CD4-positive, alpha-beta memory T cell (primary cell): ENCODE measurements at regions of chr3 and their contacts with region 1.

Region 1: DNA sequence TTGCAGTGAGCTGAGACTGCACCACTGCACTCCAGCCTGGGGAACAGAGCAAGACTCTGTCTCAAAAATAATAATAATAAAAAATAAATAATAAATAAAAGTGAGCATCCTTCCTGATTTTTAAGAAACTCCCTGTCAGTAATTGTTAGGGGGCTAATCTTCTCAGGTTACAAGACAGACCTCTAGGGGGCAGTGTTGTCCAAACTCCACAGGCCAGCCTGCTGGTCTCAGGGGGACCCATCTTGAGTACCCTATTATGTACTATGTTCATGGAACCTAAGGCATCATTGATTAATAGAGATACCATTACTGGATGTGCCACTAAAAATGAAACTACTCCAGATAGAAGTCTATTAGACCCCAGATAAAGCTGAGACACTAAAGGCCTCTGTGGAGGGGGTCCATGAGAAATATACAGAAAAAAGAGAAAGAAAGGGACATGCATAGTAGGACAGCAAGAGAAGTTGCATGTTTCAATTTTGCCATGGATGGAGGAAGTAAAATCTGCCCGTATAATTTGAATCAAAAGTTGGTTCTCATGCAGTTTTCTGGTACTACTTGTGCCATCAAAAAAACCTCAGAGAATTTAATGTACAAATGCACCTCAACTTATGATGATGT is 85.5 kb upstream of the CDV3 start:
- DNase-seq: peak; percentile 48 to 61 (median 52)
- H3K4me3 ChIP-seq: no peak overlapping the region
- H3K4me3 Mint-ChIP-seq: peak overlapping the region in 3 of 8 donors; percentile 6 to 53 (median 21)
- H3K27ac ChIP-seq: no peak overlapping the region
- H3K27ac Mint-ChIP-seq: peak overlapping the region; percentile 3 to 85 (median 36)
- H3K4me1 ChIP-seq: peaks cover 49% of the 10 kb centered on the region
- H3K4me1 Mint-ChIP-seq: peaks cover 41 to 50% (median 45%) of the 10 kb centered on the region in 4 donors
- H3K27me3 ChIP-seq: no peaks in the 10 kb centered on the region
- H3K27me3 Mint-ChIP-seq: no peaks in the 10 kb centered on the region

Region 2: GRCh38 chr3:133256787-133257483 is 231.1 kb before region 1 on chr3:
- CTCF ChIA-PET with region 1: no interaction called
- POLR2A ChIA-PET with region 1: no interaction called
- intact Hi-C with region 1: no loop called
- DNase-seq: no peak
- H3K4me3 ChIP-seq: no peak overlapping the region
- H3K4me3 Mint-ChIP-seq: no peak overlapping the region
- H3K27ac ChIP-seq: no peak overlapping the region
- H3K27ac Mint-ChIP-seq: no peak overlapping the region
- H3K4me1 ChIP-seq: no peaks in the 10 kb centered on the region
- H3K4me1 Mint-ChIP-seq: no peaks in the 10 kb centered on the region
- H3K27me3 ChIP-seq: no peaks in the 10 kb centered on the region
- H3K27me3 Mint-ChIP-seq: peaks cover 0 to 3% of the 10 kb centered on the region in 2 donors

Region 3: DNA sequence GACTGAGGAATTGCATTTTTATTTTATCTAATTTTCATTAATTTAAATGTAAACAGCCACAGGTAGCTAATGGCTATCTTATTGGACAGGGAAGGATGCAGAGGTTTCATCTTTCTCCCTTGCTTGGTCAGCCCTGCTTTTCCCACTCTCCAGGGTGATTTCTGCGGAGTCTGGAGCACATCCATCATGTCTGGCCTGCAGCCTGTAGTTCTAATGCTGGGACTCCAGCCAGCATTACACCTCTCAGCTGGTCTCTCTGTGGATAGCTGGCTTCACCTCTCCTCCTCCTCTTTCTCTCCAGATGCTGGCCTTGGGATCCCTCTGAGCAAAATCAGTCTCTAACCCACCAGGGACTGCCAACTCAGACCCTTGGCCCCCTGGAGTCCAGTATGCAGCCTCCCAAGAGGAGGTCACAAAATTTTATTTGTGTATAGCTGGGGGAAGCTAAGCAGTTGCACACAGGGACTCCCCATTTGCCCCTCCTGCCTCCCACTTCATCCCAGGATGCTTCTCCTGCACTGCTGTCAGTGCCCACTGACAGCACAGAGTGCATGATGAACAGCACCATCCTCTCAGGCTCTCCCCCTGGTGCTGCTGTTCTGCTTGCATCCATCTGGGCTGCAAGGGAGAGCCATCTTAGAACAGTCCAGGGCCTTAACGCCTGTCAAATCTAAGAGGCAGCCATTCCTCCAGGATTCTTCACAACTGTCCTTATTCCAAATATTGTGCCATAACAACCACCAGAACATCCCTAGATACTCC is 86.5 kb before region 1 on chr3:
- CTCF ChIA-PET with region 1: no interaction called
- POLR2A ChIA-PET with region 1: no interaction called
- intact Hi-C with region 1: no loop called
- DNase-seq: no peak
- H3K4me3 ChIP-seq: no peak overlapping the region
- H3K4me3 Mint-ChIP-seq: no peak overlapping the region
- H3K27ac ChIP-seq: no peak overlapping the region
- H3K27ac Mint-ChIP-seq: no peak overlapping the region
- H3K4me1 ChIP-seq: no peaks in the 10 kb centered on the region
- H3K4me1 Mint-ChIP-seq: no peaks in the 10 kb centered on the region
- H3K27me3 ChIP-seq: no peaks in the 10 kb centered on the region
- H3K27me3 Mint-ChIP-seq: peaks cover 0 to 2% of the 10 kb centered on the region in 2 donors

Region 4: GRCh38 chr3:133448478-133449122 is 39.4 kb before region 1 on chr3:
- CTCF ChIA-PET with region 1: interaction called, 3 read pairs
- POLR2A ChIA-PET with region 1: interaction called, 13 read pairs
- intact Hi-C with region 1: no loop called
- DNase-seq: peak; percentile 22 to 56 (median 32)
- H3K4me3 ChIP-seq: no peak overlapping the region
- H3K4me3 Mint-ChIP-seq: peak overlapping the region in 7 of 8 donors; percentile 13 to 81 (median 60)
- H3K27ac ChIP-seq: no peak overlapping the region
- H3K27ac Mint-ChIP-seq: peak overlapping the region; percentile 57 to 96 (median 89)
- H3K4me1 ChIP-seq: peaks cover 21% of the 10 kb centered on the region
- H3K4me1 Mint-ChIP-seq: peaks cover 19 to 38% (median 27%) of the 10 kb centered on the region in 4 donors
- H3K27me3 ChIP-seq: no peaks in the 10 kb centered on the region
- H3K27me3 Mint-ChIP-seq: no peaks in the 10 kb centered on the region

Region 5: DNA sequence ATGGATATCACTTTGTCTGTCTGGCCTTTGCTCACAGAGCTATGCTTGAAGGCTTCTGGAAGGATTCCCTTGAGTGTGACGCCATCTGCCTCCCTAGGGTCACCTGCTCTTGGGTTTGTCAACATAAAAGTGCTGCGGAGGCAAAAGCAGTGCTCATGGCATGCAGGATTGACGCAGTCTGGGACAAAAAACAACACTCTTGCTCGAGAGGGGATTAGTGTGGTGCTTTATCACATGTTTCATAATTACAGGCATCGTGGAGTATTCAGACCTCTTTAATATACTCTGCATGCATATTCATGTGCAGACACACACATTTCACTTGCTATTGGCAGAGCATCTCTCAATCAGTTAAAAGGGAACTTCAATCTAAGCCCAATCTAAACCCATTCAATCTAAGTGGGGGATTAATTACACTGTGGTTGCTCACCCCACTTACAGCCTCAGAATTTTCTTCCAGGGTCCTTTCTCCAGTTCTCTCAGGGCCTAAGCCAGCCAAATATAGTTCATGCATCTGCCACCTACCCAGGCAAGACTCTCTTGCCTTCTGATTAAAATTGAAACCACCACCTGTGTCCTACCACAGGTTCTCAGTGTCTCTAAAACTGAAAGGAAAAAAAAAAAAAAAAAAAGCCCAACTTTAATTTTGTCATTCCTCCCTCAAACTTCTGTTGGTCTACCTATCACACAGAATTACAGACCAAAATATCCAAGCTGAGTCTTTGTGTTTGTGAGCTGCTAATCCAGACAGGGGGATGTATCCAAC is 12.6 kb before region 1 on chr3:
- CTCF ChIA-PET with region 1: interaction called, 20 read pairs
- POLR2A ChIA-PET with region 1: interaction called, 3 read pairs
- intact Hi-C with region 1: no loop called
- DNase-seq: no peak
- H3K4me3 ChIP-seq: no peak overlapping the region
- H3K4me3 Mint-ChIP-seq: peak overlapping the region in 5 of 8 donors; percentile 26 to 82 (median 53)
- H3K27ac ChIP-seq: no peak overlapping the region
- H3K27ac Mint-ChIP-seq: peak overlapping the region; percentile 22 to 90 (median 76)
- H3K4me1 ChIP-seq: peaks cover 22% of the 10 kb centered on the region
- H3K4me1 Mint-ChIP-seq: peaks cover 26 to 30% (median 27%) of the 10 kb centered on the region in 4 donors
- H3K27me3 ChIP-seq: no peaks in the 10 kb centered on the region
- H3K27me3 Mint-ChIP-seq: no peaks in the 10 kb centered on the region

Region 6: DNA sequence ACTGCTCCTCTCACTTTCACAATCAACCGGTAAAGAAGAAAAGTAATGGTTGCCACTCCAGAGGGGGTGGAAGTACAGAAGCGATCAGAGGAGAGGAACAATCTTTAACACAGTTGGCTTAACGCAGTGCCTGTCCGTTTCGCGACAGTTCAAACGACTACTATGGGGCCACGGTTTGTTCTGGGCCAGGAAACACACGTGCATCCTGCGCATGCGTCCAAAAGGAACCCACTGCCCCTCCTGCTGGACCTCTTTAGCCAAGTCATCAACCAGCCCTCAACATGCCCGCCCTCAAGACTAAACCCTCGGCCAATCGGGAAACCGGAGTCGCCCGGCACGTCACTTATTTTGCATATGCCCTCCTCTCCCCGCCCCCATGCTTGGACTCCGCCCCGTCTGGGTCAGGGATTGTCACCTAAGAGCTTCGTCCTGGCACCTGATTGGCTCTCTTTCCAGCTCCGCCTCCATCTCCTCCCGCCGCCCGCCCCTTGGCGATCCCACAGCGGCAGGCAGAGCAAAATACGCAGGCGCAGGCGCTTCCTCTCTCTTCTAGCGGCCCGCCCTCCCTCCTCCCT is 85.1 kb after region 1 on chr3:
- CTCF ChIA-PET with region 1: interaction called, 123 read pairs
- POLR2A ChIA-PET with region 1: interaction called, 89 read pairs
- intact Hi-C with region 1: loop called (anchors 1 kb)
- DNase-seq: peak; percentile 100
- H3K4me3 ChIP-seq: peak overlapping the region; percentile 27 to 59
- H3K4me3 Mint-ChIP-seq: peak overlapping the region; percentile 79 to 92 (median 87)
- H3K27ac ChIP-seq: peak overlapping the region; percentile 90
- H3K27ac Mint-ChIP-seq: peak overlapping the region; percentile 97 to 99 (median 98)
- H3K4me1 ChIP-seq: peaks cover 46% of the 10 kb centered on the region
- H3K4me1 Mint-ChIP-seq: peaks cover 37 to 58% (median 47%) of the 10 kb centered on the region in 4 donors
- H3K27me3 ChIP-seq: no peaks in the 10 kb centered on the region
- H3K27me3 Mint-ChIP-seq: no peaks in the 10 kb centered on the region

Region 7: DNA sequence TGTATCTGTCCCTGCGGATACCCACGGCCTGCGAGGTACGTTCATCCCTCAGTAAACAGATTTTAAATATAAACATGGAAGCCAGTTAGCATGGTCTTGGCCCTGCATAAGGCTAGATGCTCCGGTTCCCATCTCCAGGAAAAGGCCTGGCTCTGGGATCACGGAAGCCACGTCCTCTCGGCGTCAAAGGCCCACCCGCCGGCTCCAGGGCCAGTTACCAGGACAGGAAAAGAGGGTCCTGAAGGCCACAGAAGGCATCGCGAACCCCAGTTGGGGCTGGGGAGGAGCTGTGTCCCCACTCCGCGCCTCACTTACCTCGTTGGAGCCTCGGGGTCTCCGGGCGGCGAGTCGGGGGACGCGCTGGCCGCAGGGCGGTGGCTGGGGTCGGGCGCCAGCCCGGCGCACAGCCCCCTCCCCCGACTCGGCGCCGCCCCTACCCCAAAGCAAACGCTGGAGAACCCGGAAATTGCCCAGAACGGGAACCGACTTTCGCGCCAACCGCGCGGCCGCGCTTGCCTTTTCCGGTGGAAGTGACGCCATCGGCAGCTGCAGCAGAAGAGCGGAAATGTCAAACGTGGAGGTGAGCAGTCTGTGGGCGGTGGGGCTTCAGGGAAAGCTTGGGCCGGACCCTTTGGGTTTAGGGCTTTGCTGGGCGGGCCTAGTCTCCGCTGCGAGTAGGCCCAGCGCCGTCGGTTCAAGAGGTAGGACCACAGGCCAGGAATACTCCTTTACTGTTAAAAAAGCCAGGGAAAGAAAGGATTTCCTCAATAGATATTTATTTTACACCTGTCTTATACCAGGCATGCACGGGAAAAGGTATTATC is 173.6 kb after region 1 on chr3 and contains the start of gene TOPBP1:
- CTCF ChIA-PET with region 1: interaction called, 3 read pairs
- POLR2A ChIA-PET with region 1: interaction called, 10 read pairs
- intact Hi-C with region 1: loop called (anchors 1 kb)
- DNase-seq: peak; percentile 81 to 90 (median 85)
- H3K4me3 ChIP-seq: peak within 1 kb of the TSS; percentile 78 to 99
- H3K4me3 Mint-ChIP-seq: peak within 1 kb of the TSS; percentile 98 to 99 (median 98)
- H3K27ac ChIP-seq: peak within 1 kb of the TSS; percentile 81
- H3K27ac Mint-ChIP-seq: peak within 1 kb of the TSS; percentile 98 to 99 (median 99)
- H3K4me1 ChIP-seq: peaks cover 32% of the 10 kb centered on the region
- H3K4me1 Mint-ChIP-seq: peaks cover 29 to 52% (median 40%) of the 10 kb centered on the region in 4 donors
- H3K27me3 ChIP-seq: no peaks in the 10 kb centered on the region
- H3K27me3 Mint-ChIP-seq: no peaks in the 10 kb centered on the region
- total RNA-seq, gene TOPBP1: 42.0 to 43.2 TPM

Region 8: DNA sequence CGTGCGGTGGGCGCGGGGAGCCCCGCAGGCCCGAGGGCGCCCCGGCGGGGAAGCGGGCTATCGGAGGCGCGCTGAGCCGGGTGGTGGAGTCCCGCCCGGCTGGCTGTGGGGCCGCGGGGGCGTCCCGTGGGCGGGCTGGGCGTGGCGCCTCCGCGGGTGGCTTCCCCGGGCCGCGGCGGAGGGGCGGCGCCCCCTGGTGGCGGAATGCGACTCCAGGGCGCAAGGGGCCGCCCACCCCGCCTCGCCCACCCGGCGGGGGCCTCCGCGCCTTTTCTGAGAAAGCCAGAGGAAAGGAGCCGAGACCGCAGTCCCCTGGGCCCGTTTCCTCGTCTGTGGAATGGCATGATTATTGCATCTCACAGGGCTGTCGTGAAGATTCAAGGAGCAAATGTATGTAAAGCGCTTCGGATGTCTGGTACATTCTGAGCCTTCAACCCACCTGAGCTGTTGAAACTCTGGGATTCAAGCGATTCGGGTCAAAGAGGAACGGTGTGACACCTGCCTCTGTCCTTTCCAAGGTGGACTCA is 439.6 kb after region 1 on chr3:
- CTCF ChIA-PET with region 1: interaction called, 4 read pairs
- POLR2A ChIA-PET with region 1: no interaction called
- intact Hi-C with region 1: loop called (anchors 1 kb)
- DNase-seq: peak; percentile 63 to 76 (median 75)
- H3K4me3 ChIP-seq: peak overlapping the region in 1 of 2 donors; percentile 36
- H3K4me3 Mint-ChIP-seq: peak overlapping the region; percentile 67 to 84 (median 79)
- H3K27ac ChIP-seq: no peak overlapping the region
- H3K27ac Mint-ChIP-seq: peak overlapping the region in 3 of 7 donors; percentile 11 to 74 (median 61)
- H3K4me1 ChIP-seq: peaks cover 12% of the 10 kb centered on the region
- H3K4me1 Mint-ChIP-seq: peaks cover 5 to 15% (median 9%) of the 10 kb centered on the region in 4 donors
- H3K27me3 ChIP-seq: no peaks in the 10 kb centered on the region
- H3K27me3 Mint-ChIP-seq: peaks cover 8% of the 10 kb centered on the region in 2 donors